ENCODE measurements at regions of chr13 and their contacts with region 1.

Region 1: DNA sequence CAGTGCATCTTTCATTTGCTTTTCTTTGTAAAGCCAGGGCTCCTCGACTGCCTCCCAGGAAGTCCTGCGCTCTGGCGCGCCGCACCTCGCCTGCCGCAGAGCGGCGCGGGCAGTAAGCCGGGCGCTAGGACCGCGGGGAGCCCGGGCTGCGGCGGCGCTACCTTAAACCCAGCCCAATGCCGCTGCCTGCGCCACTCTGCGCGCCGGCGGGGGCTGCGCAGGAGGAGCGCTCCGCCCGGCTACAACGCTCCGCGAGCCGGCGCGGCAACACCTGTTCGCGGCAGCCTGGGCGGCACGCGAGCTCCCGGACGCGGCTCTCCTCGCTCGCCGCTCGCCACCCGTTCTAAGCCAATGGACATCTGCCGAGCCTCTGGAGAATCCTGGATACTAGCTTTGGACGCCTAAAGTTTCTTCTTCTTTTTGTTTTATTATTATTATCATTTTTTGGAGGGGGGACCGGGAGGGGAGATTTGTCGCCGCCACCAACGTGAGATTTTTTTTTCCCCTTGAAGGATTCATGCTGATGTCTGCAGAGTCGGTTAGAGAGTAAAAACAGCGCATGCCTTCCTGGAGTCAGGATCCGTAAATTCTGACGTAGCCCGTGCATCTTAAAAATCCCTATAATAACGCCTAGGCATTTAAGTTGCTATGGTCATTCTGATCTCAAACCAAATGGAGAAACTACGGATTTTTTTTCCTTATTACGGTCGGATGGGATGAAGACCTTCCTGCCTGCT is at the start of gene FGF9:
- DNase-seq: peak in 7 of 10 donors; percentile 70 to 87 (median 74)
- H3K4me3 ChIP-seq: peak within 1 kb of the TSS; percentile 52 to 90 (median 74)
- H3K27ac ChIP-seq: peak within 1 kb of the TSS in 21 of 59 donors; percentile 13 to 69 (median 46)
- H3K27me3 ChIP-seq: peaks cover 0 to 25% (median 0%) of the 10 kb centered on the region in 45 donors
- CTCF ChIP-seq: peak in 23 of 56 donors; percentile 5 to 47 (median 27)
- total RNA-seq, gene FGF9: 4.4 to 25.3 (median 14.5) TPM

Region 2: DNA sequence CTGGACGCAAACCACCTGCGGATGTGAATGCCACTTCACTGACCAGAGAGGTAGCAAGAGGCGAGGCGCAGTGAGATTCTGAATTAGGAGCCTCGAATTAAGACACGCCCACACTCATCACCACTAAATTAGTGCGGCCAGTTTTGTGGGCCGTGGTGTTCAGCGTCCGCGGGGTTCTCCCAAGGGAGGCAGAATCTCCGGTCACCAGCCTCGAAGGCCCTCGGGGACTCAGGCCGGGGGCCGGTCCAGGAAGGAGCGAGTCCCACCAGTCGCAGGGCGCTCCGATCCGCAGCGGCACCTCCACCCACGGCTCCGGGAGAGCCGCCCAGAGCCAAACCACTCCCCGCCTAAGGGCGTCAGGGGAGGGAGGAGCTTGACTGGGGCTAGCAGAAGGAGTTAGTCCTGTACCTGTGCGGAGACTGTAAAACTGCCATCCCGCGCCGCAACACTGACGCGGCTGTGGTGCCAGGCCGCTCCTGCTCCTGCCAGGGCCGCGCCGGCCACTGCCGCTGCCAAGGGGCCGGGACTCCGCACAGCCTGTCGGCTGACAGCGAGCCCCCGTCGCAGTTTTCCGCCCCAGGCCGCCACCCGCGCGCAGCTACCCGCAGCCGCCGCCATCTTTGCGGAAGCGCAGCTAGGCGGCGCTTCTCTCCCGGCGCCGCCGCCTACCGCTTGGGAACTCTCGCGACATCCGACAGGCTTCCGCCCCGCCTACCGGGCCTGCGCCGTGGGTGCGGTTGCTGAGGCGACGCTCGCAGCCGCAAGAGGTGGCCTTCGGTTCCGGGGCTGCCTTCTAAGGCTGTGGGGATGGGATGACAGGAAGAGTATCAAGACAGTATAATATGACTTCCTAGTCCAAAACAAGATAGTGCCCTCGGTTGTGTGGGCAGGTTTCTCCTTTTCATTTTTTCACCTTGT is 67.3 kb before region 1 on chr13 and contains the start of gene MICU2:
- intact Hi-C with region 1: loop called in 1 of 2 experiments (anchors 2 kb)
- DNase-seq: peak; percentile 78 to 95 (median 90)
- H3K4me3 ChIP-seq: peak within 1 kb of the TSS; percentile 68 to 99 (median 86)
- H3K27ac ChIP-seq: peak within 1 kb of the TSS; percentile 74 to 99 (median 96)
- H3K27me3 ChIP-seq: peaks cover 0 to 16% (median 0%) of the 10 kb centered on the region in 45 donors
- CTCF ChIP-seq: peak; percentile 1 to 83 (median 64)
- total RNA-seq, gene MICU2: 26.5 to 61.5 (median 42.9) TPM

Region 3: GRCh38 chr13:22278336-22278929 is 607.4 kb after region 1 on chr13:
- intact Hi-C with region 1: loop called in 1 of 2 experiments (anchors 5 kb)
- DNase-seq: peak in 7 of 10 donors; percentile 13 to 63 (median 37)
- H3K4me3 ChIP-seq: no peak overlapping the region
- H3K27ac ChIP-seq: no peak overlapping the region
- H3K27me3 ChIP-seq: peaks cover 0 to 5% (median 0%) of the 10 kb centered on the region in 45 donors
- CTCF ChIP-seq: peak in 53 of 56 donors; percentile 28 to 66 (median 47)